A549 (cell line): ENCODE measurements at regions of chr10 and their contacts with region 1.

Region 1: DNA sequence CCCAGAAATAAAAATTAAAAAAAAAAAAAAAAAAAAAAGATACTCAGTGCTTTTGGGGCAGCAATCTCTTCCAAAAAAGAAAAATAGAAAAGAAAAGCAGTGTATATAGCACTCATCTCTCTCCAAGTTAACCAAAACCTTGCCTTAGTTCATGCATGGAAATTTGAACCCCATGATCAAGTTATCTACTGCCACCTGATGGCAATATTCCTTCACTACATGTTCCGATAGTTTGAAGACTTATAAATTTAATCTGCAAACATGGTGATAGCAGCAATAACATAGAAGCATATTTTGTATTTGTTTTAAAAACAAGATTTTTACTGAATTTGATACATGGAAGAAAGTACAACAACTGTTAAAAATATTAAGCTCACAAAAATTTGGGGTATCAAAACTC is 48.6 kb upstream of the SLIT1 start:
- DNase-seq: peak; percentile 13 to 51
- ATAC-seq: peak; percentile 54 to 58; a peak in 3 of 6 replicates
- H3K4me3 ChIP-seq: no peak overlapping the region
- H3K27ac ChIP-seq: no peak overlapping the region
- H3K4me1 ChIP-seq: peaks cover 12% of the 10 kb centered on the region
- CTCF ChIP-seq: peak; percentile 70
- EP300 ChIP-seq: no peak
- POLR2A ChIP-seq: no peak
- RAD21 ChIP-seq: peak; percentile 71

Region 2: DNA sequence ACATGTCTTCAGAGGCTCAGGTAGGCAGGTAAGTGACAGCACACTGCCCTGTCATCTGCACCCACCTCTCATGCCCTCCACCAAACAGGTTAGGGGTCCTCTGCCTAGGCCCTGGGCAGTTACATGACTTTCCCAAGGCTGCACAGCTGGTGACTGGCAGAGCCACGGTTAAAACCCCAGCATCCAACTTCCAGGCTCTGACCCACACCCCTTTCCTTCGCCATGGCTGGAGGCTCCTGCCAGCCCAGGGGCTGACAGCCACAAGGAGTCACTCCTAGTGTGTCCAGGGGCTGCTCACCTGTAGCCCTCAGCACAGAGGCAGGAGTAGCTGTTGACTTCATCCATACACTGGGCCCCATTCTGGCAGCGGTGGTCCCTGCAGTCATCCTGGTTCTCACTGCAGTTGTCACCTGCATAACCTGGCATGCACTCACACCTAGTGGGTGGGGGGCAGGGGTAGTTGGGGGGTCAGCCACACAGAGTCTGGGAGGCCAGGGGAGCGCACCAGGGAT is 223.6 kb before region 1 on chr10:
- CTCF ChIA-PET with region 1: no interaction called
- POLR2A ChIA-PET with region 1: no interaction called
- DNase-seq: no peak
- ATAC-seq: peak; percentile 35 to 47; a peak in 4 of 6 replicates
- H3K4me3 ChIP-seq: no peak overlapping the region
- H3K27ac ChIP-seq: no peak overlapping the region
- H3K4me1 ChIP-seq: no peaks in the 10 kb centered on the region
- CTCF ChIP-seq: no peak
- EP300 ChIP-seq: no peak
- POLR2A ChIP-seq: no peak
- RAD21 ChIP-seq: no peak

Region 3: DNA sequence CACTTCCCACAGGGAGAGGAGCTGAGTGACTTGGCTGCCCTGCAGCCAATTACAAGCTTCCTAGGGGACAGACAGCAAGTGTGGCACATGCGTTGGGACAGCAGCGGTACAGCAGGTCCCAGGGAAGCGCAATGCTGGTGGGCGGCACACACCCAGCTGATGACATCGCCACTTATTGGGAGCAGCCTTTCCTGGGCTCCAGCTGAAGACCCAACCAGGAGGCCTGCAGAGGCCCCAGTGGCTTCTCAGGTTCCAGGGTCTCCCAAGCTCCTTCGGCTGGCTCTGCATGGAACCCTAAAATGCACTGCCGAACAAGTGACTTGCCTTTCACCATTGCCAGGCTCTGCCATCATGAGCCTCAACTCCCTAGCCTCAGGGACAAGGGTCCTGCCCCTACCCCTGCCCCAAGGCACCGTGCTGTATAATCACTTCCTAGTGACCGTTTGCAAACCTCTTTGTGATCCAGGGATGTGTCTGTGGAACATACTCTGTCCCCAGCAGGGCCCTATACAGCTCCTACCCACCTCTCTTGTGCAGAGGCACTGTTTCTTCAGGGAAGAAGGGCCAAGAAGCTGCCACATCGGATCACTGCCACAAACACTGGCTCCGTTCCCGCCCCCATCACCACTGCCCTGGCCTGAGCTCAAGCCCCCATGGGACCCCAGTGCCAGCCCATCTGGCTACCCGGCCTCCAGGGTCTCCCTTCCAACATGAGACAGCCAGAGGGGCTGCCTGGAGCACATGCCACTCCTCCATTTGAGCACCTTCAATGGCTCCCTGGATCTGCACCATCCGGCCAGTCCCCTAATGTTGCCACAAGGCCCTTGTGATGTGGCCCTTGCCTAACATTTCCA is 29.3 kb before region 1 on chr10:
- CTCF ChIA-PET with region 1: interaction called, 47 read pairs
- POLR2A ChIA-PET with region 1: no interaction called
- DNase-seq: no peak
- ATAC-seq: no peak
- H3K4me3 ChIP-seq: no peak overlapping the region
- H3K27ac ChIP-seq: no peak overlapping the region
- H3K4me1 ChIP-seq: no peaks in the 10 kb centered on the region
- CTCF ChIP-seq: no peak
- EP300 ChIP-seq: no peak
- POLR2A ChIP-seq: no peak
- RAD21 ChIP-seq: no peak

Region 4: DNA sequence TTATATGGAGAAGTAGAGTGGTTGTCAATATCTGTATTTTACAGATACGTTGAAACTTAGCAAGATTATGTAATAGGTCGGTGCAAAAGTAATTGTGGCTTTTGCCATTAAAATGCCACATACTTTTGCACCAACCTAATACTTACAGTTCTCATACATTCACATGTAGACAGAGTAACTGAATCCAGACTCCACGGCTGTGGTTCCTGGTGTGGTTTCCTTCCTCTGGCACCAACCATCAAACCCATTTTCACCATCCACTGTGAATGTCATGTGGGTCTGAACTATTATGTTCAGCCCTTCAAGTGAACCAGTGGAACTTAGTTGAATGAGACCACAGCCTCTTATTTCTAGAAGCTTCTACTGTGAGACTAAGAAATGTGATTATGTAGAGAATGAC is 17.1 kb before region 1 on chr10:
- CTCF ChIA-PET with region 1: interaction called, 47 read pairs
- POLR2A ChIA-PET with region 1: no interaction called
- DNase-seq: no peak
- ATAC-seq: no peak
- H3K4me3 ChIP-seq: no peak overlapping the region
- H3K27ac ChIP-seq: no peak overlapping the region
- H3K4me1 ChIP-seq: no peaks in the 10 kb centered on the region
- CTCF ChIP-seq: no peak
- EP300 ChIP-seq: no peak
- POLR2A ChIP-seq: no peak
- RAD21 ChIP-seq: no peak

Region 5: GRCh38 chr10:97222326-97222961 is 12.0 kb before region 1 on chr10:
- CTCF ChIA-PET with region 1: interaction called, 32 read pairs
- POLR2A ChIA-PET with region 1: no interaction called
- DNase-seq: no peak
- ATAC-seq: no peak
- H3K4me3 ChIP-seq: no peak overlapping the region
- H3K27ac ChIP-seq: no peak overlapping the region
- H3K4me1 ChIP-seq: no peaks in the 10 kb centered on the region
- CTCF ChIP-seq: no peak
- EP300 ChIP-seq: no peak
- POLR2A ChIP-seq: no peak
- RAD21 ChIP-seq: no peak

Region 6: GRCh38 chr10:97259119-97259518 is 24.7 kb after region 1 on chr10:
- CTCF ChIA-PET with region 1: interaction called, 19 read pairs
- POLR2A ChIA-PET with region 1: no interaction called
- DNase-seq: no peak
- ATAC-seq: no peak
- H3K4me3 ChIP-seq: no peak overlapping the region
- H3K27ac ChIP-seq: no peak overlapping the region
- H3K4me1 ChIP-seq: no peaks in the 10 kb centered on the region
- CTCF ChIP-seq: no peak
- EP300 ChIP-seq: no peak
- POLR2A ChIP-seq: no peak
- RAD21 ChIP-seq: no peak

Region 7: GRCh38 chr10:97353945-97354344 is 119.5 kb after region 1 on chr10:
- CTCF ChIA-PET with region 1: no interaction called
- POLR2A ChIA-PET with region 1: no interaction called
- DNase-seq: no peak
- ATAC-seq: no peak
- H3K4me3 ChIP-seq: no peak overlapping the region
- H3K27ac ChIP-seq: no peak overlapping the region
- H3K4me1 ChIP-seq: no peaks in the 10 kb centered on the region
- CTCF ChIP-seq: no peak
- EP300 ChIP-seq: no peak
- POLR2A ChIP-seq: no peak
- RAD21 ChIP-seq: no peak